Activated CD8-positive, alpha-beta T cell treated with anti-CD3 and anti-CD28 coated beads, Interleukin-2, amount 10 ng/mL, durations not matched to agents 7 days and 5 days (primary cell): ENCODE measurements at regions of chr1 and their contacts with region 1.

Region 1: DNA sequence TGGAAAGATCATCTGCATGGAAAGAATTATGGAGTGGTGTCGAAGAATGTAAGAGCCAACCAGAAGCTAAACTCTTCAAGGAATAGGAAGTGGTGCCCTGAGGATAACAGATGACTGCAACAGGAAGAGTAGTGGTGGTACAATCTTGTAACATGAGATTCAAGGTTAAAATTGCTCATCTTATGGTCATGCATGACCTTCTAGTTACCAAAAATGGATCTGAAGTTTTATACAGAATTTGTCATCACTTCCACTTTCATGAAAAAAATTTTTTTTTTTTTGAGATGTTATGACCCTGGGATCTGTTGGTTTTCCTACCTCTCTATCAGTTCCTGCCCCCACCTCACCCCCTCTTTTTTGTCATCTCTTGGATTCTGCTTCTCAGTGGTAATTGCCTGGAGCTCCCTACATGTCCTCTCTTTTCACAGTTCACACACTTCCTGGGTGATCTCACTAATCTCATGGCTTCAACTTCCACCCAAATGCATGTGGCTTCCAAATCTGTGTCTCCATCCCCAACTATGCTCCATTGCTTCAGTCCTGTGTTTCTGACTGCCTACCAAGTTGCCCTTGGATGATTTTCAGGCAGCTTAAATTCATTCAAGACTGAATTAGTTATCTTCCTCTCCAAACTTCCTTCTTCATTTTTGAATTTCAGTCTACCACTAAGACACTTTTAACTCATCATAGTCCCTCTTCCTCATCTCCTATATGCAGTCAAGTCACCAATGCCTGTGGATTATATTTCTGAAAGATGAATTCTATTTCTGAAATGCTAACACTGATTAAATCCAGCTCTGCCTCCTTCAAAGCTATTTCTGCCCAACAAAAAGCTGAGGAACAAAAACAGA is 48.4 kb downstream of the SLAMF6 start:
- DNase-seq: no peak
- ATAC-seq: peak; percentile 70
- H3K4me3 Mint-ChIP-seq: no peak overlapping the region
- H3K27ac Mint-ChIP-seq: no peak overlapping the region
- H3K4me1 Mint-ChIP-seq: peaks cover 6% of the 10 kb centered on the region
- H3K27me3 Mint-ChIP-seq: no peaks in the 10 kb centered on the region

Region 2: GRCh38 chr1:160394673-160395072 is 79.9 kb before region 1 on chr1:
- CTCF ChIA-PET with region 1: no interaction called
- POLR2A ChIA-PET with region 1: no interaction called
- DNase-seq: no peak
- ATAC-seq: no peak
- H3K4me3 Mint-ChIP-seq: no peak overlapping the region
- H3K27ac Mint-ChIP-seq: no peak overlapping the region
- H3K4me1 Mint-ChIP-seq: no peaks in the 10 kb centered on the region
- H3K27me3 Mint-ChIP-seq: peaks cover 36% of the 10 kb centered on the region

Region 3: GRCh38 chr1:160428655-160429054 is 46.0 kb before region 1 on chr1:
- CTCF ChIA-PET with region 1: interaction called, 16 read pairs
- POLR2A ChIA-PET with region 1: no interaction called
- DNase-seq: peak; percentile 49
- ATAC-seq: peak; percentile 71
- H3K4me3 Mint-ChIP-seq: peak overlapping the region; percentile 32
- H3K27ac Mint-ChIP-seq: peak overlapping the region; percentile 82
- H3K4me1 Mint-ChIP-seq: peaks cover 55% of the 10 kb centered on the region
- H3K27me3 Mint-ChIP-seq: no peaks in the 10 kb centered on the region

Region 4: GRCh38 chr1:160451119-160451858 is 23.3 kb before region 1 on chr1:
- CTCF ChIA-PET with region 1: interaction called, 14 read pairs
- POLR2A ChIA-PET with region 1: no interaction called
- DNase-seq: no peak
- ATAC-seq: peak; percentile 35
- H3K4me3 Mint-ChIP-seq: no peak overlapping the region
- H3K27ac Mint-ChIP-seq: peak overlapping the region; percentile 60
- H3K4me1 Mint-ChIP-seq: peaks cover 51% of the 10 kb centered on the region
- H3K27me3 Mint-ChIP-seq: no peaks in the 10 kb centered on the region

Region 5: DNA sequence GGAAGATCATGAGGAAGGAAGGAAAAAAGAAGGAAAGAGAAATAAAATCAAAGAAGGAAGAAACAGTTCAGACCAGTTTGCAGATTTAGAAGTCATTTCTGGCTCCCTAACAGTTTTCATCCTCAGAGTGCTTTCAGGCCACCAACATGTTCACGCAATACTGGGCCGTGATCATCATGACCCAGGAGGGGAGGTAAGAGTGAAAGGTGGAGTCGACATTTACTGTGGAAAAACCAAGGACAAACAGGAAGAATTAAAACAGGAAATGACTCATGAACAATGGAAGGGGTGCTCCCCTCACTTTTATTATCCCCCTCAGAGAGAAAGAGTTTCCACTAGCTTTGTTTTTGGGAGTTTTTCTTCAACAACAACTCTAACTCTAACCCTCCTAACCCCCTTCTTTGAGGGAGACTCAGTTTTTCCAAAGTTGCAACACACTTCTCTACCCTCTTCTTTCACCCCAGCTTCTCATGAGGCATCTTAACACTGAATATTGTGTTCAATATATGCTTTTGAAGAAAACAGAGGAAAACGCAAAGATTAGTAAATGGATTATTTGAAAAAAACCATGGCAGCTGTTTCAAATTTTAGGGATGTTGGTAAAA is 13.8 kb before region 1 on chr1:
- CTCF ChIA-PET with region 1: interaction called, 21 read pairs
- POLR2A ChIA-PET with region 1: no interaction called
- DNase-seq: no peak
- ATAC-seq: peak; percentile 66
- H3K4me3 Mint-ChIP-seq: peak overlapping the region; percentile 53
- H3K27ac Mint-ChIP-seq: peak overlapping the region; percentile 92
- H3K4me1 Mint-ChIP-seq: peaks cover 49% of the 10 kb centered on the region
- H3K27me3 Mint-ChIP-seq: no peaks in the 10 kb centered on the region

Region 6: GRCh38 chr1:160519642-160520435 is 45.2 kb after region 1 on chr1:
- CTCF ChIA-PET with region 1: interaction called, 12 read pairs
- POLR2A ChIA-PET with region 1: interaction called, 3 read pairs
- DNase-seq: peak; percentile 48
- ATAC-seq: peak; percentile 65
- H3K4me3 Mint-ChIP-seq: peak overlapping the region; percentile 83
- H3K27ac Mint-ChIP-seq: peak overlapping the region; percentile 93
- H3K4me1 Mint-ChIP-seq: peaks cover 90% of the 10 kb centered on the region
- H3K27me3 Mint-ChIP-seq: no peaks in the 10 kb centered on the region

Region 7: DNA sequence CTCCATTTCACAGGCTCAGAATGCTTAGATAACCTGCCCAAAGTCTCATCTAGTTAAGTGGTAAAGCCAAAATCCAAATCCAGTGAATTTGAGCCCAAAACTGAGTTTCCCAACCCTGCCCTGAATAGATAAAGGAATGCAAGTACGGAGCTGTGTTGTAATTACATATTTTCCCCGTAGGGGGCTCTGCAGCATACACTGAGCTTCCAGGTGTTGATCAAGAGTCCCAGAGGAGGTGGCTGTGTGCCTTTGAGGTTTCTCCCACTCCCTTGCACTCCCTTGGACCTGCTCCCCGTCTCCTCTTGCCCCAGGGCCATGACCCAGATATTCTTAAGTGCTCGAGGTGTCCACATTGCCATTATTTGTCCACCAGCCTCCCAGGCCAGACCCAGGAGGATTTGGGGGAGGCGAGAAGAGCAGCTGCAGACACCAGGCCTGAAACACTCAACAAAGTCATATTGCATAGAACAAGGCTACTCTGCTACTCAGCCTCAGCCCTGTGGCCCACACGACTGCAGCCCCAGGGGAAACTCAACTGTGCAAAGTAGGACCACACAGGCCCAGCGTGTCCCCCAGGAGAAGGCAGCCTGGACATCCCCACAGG is 303.0 kb after region 1 on chr1:
- CTCF ChIA-PET with region 1: no interaction called
- POLR2A ChIA-PET with region 1: no interaction called
- DNase-seq: peak; percentile 66
- ATAC-seq: peak; percentile 76
- H3K4me3 Mint-ChIP-seq: no peak overlapping the region
- H3K27ac Mint-ChIP-seq: peak overlapping the region; percentile 26
- H3K4me1 Mint-ChIP-seq: peaks cover 40% of the 10 kb centered on the region
- H3K27me3 Mint-ChIP-seq: no peaks in the 10 kb centered on the region

Region 8: GRCh38 chr1:160830321-160831153 is 355.9 kb after region 1 on chr1:
- CTCF ChIA-PET with region 1: no interaction called
- POLR2A ChIA-PET with region 1: no interaction called
- DNase-seq: peak; percentile 87
- ATAC-seq: peak; percentile 83
- H3K4me3 Mint-ChIP-seq: no peak overlapping the region
- H3K27ac Mint-ChIP-seq: no peak overlapping the region
- H3K4me1 Mint-ChIP-seq: peaks cover 40% of the 10 kb centered on the region
- H3K27me3 Mint-ChIP-seq: no peaks in the 10 kb centered on the region